GM12878 (cell line): ENCODE measurements at regions of chr3 and their contacts with region 1.

Region 1: GRCh38 chr3:186849374-186849975 is 7.0 kb downstream of the ADIPOQ start:
- DNase-seq: peak; percentile 30
- ATAC-seq: peak; percentile 97
- H3K4me3 ChIP-seq: no peak overlapping the region
- H3K27ac ChIP-seq: no peak overlapping the region
- H3K4me1 ChIP-seq: no peaks in the 10 kb centered on the region
- H3K27me3 ChIP-seq: peaks cover 0 to 7% of the 10 kb centered on the region in 2 experiments; a peak in 3 of 4 replicates
- CTCF ChIP-seq: peak; percentile 41 to 72 (median 56); a peak in 5 of 6 replicates
- EP300 ChIP-seq: no peak
- POLR2A ChIP-seq: no peak
- RAD21 ChIP-seq: peak; percentile 84

Region 2: GRCh38 chr3:186930641-186931531 is 81.4 kb after region 1 on chr3:
- CTCF ChIA-PET with region 1: interaction called, 11 read pairs
- POLR2A ChIA-PET with region 1: no interaction called
- RAD21 ChIA-PET with region 1: interaction called, 3 read pairs
- SMC1A ChIA-PET with region 1: interaction called, 20 read pairs
- in situ Hi-C with region 1: loop called (anchors 5 kb)
- intact Hi-C with region 1: loop called (anchors 2 kb)
- DNase-seq: peak; percentile 52
- ATAC-seq: peak; percentile 92
- H3K4me3 ChIP-seq: peak overlapping the region; percentile 96
- H3K27ac ChIP-seq: peak overlapping the region; percentile 81
- H3K4me1 ChIP-seq: peaks cover 11% of the 10 kb centered on the region
- H3K27me3 ChIP-seq: no peaks in the 10 kb centered on the region
- CTCF ChIP-seq: peak; percentile 26 to 33 (median 31); a peak in 5 of 6 replicates
- EP300 ChIP-seq: no peak
- POLR2A ChIP-seq: peak; percentile 67
- RAD21 ChIP-seq: peak; percentile 47

Region 3: GRCh38 chr3:187000711-187001151 is 151.3 kb after region 1 on chr3:
- CTCF ChIA-PET with region 1: interaction called, 3 read pairs
- POLR2A ChIA-PET with region 1: no interaction called
- RAD21 ChIA-PET with region 1: interaction called, 13 read pairs
- SMC1A ChIA-PET with region 1: interaction called, 4 read pairs
- in situ Hi-C with region 1: no loop called
- intact Hi-C with region 1: no loop called
- DNase-seq: peak; percentile 99
- ATAC-seq: peak; percentile 79
- H3K4me3 ChIP-seq: peak overlapping the region; percentile 46; the same call in 1 of the 2 replicates
- H3K27ac ChIP-seq: peak overlapping the region; percentile 91
- H3K4me1 ChIP-seq: peaks cover 51% of the 10 kb centered on the region
- H3K27me3 ChIP-seq: no peaks in the 10 kb centered on the region
- CTCF ChIP-seq: no peak
- EP300 ChIP-seq: peak; percentile 99 to 100
- POLR2A ChIP-seq: peak; percentile 66
- RAD21 ChIP-seq: no peak

Region 4: DNA sequence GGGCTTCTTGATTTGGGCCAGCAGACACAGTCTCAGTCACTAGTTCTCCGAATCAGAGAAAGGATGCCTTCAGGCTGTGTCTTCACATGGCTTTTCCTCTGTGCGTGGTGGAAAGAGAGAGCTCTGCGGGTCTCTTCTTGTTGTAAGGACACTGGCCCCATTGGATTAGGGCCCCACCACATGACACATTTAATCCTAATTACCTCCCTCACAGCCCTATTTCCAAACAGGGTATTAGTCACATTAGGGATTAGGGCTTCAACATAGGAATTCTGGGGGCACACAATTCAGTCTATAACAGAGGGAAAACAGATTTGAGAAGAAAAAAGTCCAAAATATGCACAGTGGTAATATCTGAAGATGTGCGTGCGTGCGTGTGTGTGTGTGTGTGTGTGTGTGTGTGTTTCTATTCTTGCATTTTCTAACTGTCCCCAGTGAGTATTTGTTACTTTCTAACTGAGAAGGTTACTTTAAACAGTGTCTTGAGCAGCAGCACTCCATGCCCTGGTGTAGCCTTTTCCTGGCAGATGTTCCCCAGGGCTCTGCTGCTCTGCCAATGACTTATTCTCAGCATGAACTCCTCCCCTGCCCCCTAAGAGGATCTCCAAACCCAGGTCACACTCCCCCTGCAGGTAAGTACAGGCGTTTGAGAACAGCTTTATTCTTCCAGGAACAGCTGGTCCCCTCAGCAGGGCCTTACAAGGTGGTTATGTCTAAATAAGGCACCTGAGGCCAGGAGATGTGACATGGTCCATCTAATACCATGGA is 216.9 kb after region 1 on chr3:
- CTCF ChIA-PET with region 1: interaction called, 9 read pairs
- POLR2A ChIA-PET with region 1: no interaction called
- RAD21 ChIA-PET with region 1: interaction called, 7 read pairs
- SMC1A ChIA-PET with region 1: interaction called, 11 read pairs
- in situ Hi-C with region 1: no loop called
- intact Hi-C with region 1: loop called (anchors 1 kb)
- DNase-seq: no peak
- ATAC-seq: peak; percentile 67
- H3K4me3 ChIP-seq: no peak overlapping the region
- H3K27ac ChIP-seq: peak overlapping the region; percentile 82
- H3K4me1 ChIP-seq: peaks cover 41% of the 10 kb centered on the region
- H3K27me3 ChIP-seq: no peaks in the 10 kb centered on the region
- CTCF ChIP-seq: peak; percentile 34 to 71 (median 48); a peak in 5 of 6 replicates
- EP300 ChIP-seq: no peak
- POLR2A ChIP-seq: peak; percentile 22; the same call in 1 of the 2 replicates
- RAD21 ChIP-seq: peak; percentile 71

Region 5: GRCh38 chr3:187101184-187102072 is 252.0 kb after region 1 on chr3:
- CTCF ChIA-PET with region 1: interaction called, 10 read pairs
- POLR2A ChIA-PET with region 1: no interaction called
- RAD21 ChIA-PET with region 1: interaction called, 3 read pairs
- SMC1A ChIA-PET with region 1: interaction called, 13 read pairs
- in situ Hi-C with region 1: no loop called
- intact Hi-C with region 1: no loop called
- DNase-seq: no peak
- ATAC-seq: peak; percentile 65
- H3K4me3 ChIP-seq: no peak overlapping the region
- H3K27ac ChIP-seq: no peak overlapping the region
- H3K4me1 ChIP-seq: 0 out of 2 replicates have a peak, but pooled peaks cover 5% of the 10 kb centered on the region
- H3K27me3 ChIP-seq: no peaks in the 10 kb centered on the region
- CTCF ChIP-seq: no peak
- EP300 ChIP-seq: no peak
- POLR2A ChIP-seq: no peak
- RAD21 ChIP-seq: no peak

Region 6: DNA sequence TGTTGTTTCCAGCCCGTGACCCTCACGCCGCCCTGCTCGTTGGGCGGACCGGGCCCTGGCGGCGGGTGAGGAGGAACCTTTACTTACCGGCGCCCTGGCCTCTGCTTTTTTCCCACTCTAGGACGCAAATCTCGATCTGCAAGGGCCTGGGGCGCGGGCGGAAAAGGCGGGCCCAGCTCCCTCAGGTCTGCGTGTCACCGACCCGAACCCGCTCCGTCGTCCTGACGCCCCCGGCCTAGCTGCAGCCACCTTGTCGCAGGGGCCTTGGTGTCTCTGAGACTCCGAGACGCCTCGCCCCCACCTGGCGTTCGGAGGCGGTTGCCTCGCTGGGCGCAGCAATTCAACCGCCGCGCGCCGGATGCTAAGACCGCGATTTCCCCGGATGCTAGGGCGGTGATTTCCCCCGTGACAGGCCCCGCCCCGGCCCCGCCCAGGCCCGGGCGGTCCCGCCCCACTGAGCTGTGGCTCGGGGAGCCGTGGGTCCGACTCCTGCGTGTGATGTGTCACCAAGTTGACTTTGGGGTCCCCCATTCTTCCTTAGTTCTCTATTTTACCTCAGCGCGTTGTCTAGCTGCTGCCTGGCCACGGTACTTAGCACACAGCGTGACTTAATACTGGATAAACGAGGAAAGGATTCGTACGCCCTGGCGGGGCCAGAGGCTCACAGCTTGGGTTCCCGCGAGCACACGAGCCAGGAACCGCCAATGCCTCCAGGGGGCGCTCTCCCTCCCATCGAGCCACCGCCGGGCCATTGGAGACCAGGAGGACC is 289.8 kb after region 1 on chr3 and contains the start of gene RPL39L:
- CTCF ChIA-PET with region 1: interaction called, 23 read pairs
- POLR2A ChIA-PET with region 1: no interaction called
- RAD21 ChIA-PET with region 1: interaction called, 12 read pairs
- SMC1A ChIA-PET with region 1: interaction called, 3 read pairs
- in situ Hi-C with region 1: no loop called
- intact Hi-C with region 1: no loop called
- DNase-seq: peak; percentile 64
- ATAC-seq: peak; percentile 99
- H3K4me3 ChIP-seq: peak within 1 kb of the TSS; percentile 63
- H3K27ac ChIP-seq: peak within 1 kb of the TSS; percentile 92
- H3K4me1 ChIP-seq: peaks cover 7% of the 10 kb centered on the region; the same call in 1 of the 2 replicates
- H3K27me3 ChIP-seq: no peaks in the 10 kb centered on the region
- CTCF ChIP-seq: peak; percentile 80 to 86 (median 84)
- EP300 ChIP-seq: no peak
- POLR2A ChIP-seq: peak; percentile 96
- RAD21 ChIP-seq: no peak
- polyA plus RNA-seq, gene RPL39L: 12.5 to 33.7 TPM

Region 7: GRCh38 chr3:187164885-187165543 is 315.5 kb after region 1 on chr3:
- CTCF ChIA-PET with region 1: interaction called, 147 read pairs
- POLR2A ChIA-PET with region 1: interaction called, 5 read pairs
- RAD21 ChIA-PET with region 1: interaction called, 74 read pairs
- SMC1A ChIA-PET with region 1: interaction called, 95 read pairs
- in situ Hi-C with region 1: loop called (anchors 5 kb)
- intact Hi-C with region 1: loop called (anchors 1 kb)
- DNase-seq: no peak
- ATAC-seq: peak; percentile 76
- H3K4me3 ChIP-seq: no peak overlapping the region
- H3K27ac ChIP-seq: no peak overlapping the region
- H3K4me1 ChIP-seq: no peaks in the 10 kb centered on the region
- H3K27me3 ChIP-seq: no peaks in the 10 kb centered on the region; a peak in 1 of 4 replicates
- CTCF ChIP-seq: peak; percentile 52 to 60 (median 57); a peak in 5 of 6 replicates
- EP300 ChIP-seq: no peak
- POLR2A ChIP-seq: no peak
- RAD21 ChIP-seq: peak; percentile 74